Left ventricle myocardium superior (tissue), 1 donor: ENCODE measurements at regions of chr14 and their contacts with region 1.

Region 1: GRCh38 chr14:75088574-75089373 is 19.3 kb downstream of the ZC2HC1C start:
- DNase-seq: no peak
- ATAC-seq: peak; percentile 77

Region 2: GRCh38 chr14:74913986-74914573 is 174.7 kb before region 1 on chr14:
- intact Hi-C with region 1: loop called (anchors 10 kb)
- DNase-seq: peak; percentile 74
- ATAC-seq: peak; percentile 52